ENCODE measurements at regions of chr7 and their contacts with region 1.

Region 1: GRCh38 chr7:23298885-23299769 is at the start of gene MALSU1:
- DNase-seq: peak; percentile 98
- H3K4me3 ChIP-seq: peak within 1 kb of the TSS; percentile 73 to 81 (median 75)
- H3K27ac ChIP-seq: peak within 1 kb of the TSS; percentile 32
- H3K4me1 ChIP-seq: peaks cover 11% of the 10 kb centered on the region
- H3K27me3 ChIP-seq: no peaks in the 10 kb centered on the region
- CTCF ChIP-seq: no peak
- POLR2A ChIP-seq: peak; percentile 88
- total RNA-seq, gene MALSU1: 58.4 and 62.6 TPM in 2 replicates

Region 2: DNA sequence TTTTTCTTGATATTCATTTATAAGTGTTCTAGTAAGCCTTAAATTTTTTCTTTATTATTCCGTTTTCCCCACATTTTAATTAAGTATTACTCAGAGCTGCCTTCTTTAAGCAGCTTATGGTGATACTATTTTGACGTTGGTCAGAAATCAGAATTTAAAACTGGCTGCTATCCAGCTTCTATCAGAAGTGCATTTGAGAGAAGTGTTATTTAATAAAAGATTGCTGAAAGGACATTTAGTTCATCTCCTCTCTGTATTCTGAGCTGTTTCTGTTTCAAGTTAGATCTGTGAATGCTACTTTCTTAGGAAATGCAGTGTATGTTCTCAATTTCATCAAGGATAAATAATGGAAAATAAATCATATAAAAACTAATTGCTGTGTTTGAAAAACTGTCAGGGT is 176.1 kb before region 1 on chr7:
- CTCF ChIA-PET with region 1: no interaction called
- POLR2A ChIA-PET with region 1: no interaction called
- dilution Hi-C with region 1: no loop called
- intact Hi-C with region 1: no loop called
- DNase-seq: no peak
- H3K4me3 ChIP-seq: no peak overlapping the region
- H3K27ac ChIP-seq: no peak overlapping the region
- H3K4me1 ChIP-seq: no peaks in the 10 kb centered on the region
- H3K27me3 ChIP-seq: no peaks in the 10 kb centered on the region
- CTCF ChIP-seq: no peak
- POLR2A ChIP-seq: no peak

Region 3: DNA sequence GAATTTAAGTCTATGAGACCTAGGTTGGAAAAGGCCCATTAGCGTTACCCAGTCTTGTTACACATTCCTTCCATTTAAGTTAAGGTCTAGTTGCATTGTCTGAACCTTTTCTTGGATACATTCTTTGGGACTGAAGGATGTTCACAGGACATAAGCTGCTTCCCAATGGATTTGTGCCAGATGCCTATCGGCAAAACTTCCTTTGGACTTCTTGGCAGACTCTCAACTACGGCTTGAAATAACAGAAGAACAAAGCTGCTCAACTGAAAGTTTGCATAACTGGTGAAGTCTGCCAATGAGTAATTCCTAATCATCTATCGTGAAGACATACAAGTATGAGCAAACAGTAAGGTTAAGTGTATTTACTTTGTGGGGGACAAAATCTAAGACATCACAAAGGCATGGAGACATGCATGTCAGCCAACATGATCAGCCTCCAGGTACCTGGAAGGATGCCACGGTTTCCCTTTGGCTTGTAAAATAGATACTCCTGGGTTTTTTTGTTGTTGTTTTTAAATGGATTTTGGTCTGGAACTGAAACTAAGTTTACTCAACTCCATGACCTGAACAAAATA is 35.4 kb after region 1 on chr7:
- CTCF ChIA-PET with region 1: no interaction called
- POLR2A ChIA-PET with region 1: no interaction called
- dilution Hi-C with region 1: no loop called
- intact Hi-C with region 1: loop called (anchors 2 kb)
- DNase-seq: peak; percentile 99
- H3K4me3 ChIP-seq: no peak overlapping the region
- H3K27ac ChIP-seq: peak overlapping the region; percentile 93
- H3K4me1 ChIP-seq: peaks cover 46% of the 10 kb centered on the region
- H3K27me3 ChIP-seq: no peaks in the 10 kb centered on the region
- CTCF ChIP-seq: no peak
- POLR2A ChIP-seq: peak; percentile 76

Region 4: DNA sequence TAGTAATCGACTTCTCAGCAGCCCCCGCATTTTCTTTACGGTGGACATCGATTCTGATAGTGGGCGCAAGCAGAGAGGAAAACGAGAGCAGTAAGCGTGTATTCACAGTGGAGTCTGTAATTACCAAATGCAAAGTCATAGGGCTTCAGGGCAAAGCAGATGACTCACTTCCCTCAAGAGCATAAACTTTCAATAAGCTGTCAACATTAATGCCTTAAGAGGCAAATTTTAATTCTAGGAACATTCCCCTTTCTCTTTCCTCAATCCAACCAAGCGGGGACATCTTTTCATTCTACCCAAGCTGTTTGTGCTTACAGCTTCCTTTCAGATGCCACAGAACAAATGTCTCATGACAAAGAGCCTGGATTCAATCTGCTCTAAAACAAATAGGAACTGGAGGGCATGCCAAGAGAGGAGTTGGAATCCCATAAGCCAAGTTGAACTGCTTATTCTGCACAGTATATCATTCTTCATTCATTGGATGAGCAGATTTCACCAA is 48.6 kb after region 1 on chr7:
- CTCF ChIA-PET with region 1: interaction called, 3 read pairs
- POLR2A ChIA-PET with region 1: interaction called, 4 read pairs
- dilution Hi-C with region 1: no loop called
- intact Hi-C with region 1: loop called (anchors 1 kb)
- DNase-seq: peak; percentile 88
- H3K4me3 ChIP-seq: peak overlapping the region; percentile 27 to 67 (median 61)
- H3K27ac ChIP-seq: peak overlapping the region; percentile 88
- H3K4me1 ChIP-seq: peaks cover 80% of the 10 kb centered on the region
- H3K27me3 ChIP-seq: no peaks in the 10 kb centered on the region
- CTCF ChIP-seq: no peak
- POLR2A ChIP-seq: peak; percentile 44

Region 5: GRCh38 chr7:23418046-23418445 is 118.9 kb after region 1 on chr7:
- CTCF ChIA-PET with region 1: interaction called, 4 read pairs
- POLR2A ChIA-PET with region 1: no interaction called
- dilution Hi-C with region 1: no loop called
- intact Hi-C with region 1: loop called (anchors 5 kb)
- DNase-seq: peak; percentile 84
- H3K4me3 ChIP-seq: no peak overlapping the region
- H3K27ac ChIP-seq: peak overlapping the region; percentile 32
- H3K4me1 ChIP-seq: peaks cover 26% of the 10 kb centered on the region
- H3K27me3 ChIP-seq: no peaks in the 10 kb centered on the region
- CTCF ChIP-seq: no peak
- POLR2A ChIP-seq: no peak

Region 6: DNA sequence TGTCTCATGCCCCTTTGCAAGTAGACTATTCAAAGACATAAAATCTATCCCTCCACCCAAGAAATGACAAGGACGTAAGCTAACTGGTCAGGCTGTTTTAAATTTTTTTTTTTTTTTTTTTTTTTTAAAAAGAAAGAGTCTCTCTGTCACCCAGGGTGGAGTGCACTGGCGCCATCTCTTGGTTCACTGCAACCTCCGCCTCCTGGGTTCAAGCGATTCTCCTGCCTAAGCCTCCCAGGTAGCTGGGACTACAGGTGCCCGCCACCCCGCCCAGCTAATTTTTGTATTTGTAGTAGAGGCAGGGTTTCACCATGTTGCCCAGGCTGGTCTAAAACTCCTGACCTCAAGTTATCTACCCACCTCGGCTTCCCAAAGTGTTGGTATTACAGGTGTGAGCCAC is 221.5 kb after region 1 on chr7:
- CTCF ChIA-PET with region 1: interaction called, 3 read pairs
- POLR2A ChIA-PET with region 1: no interaction called
- dilution Hi-C with region 1: loop called (anchors 25 kb)
- intact Hi-C with region 1: no loop called
- DNase-seq: no peak
- H3K4me3 ChIP-seq: no peak overlapping the region
- H3K27ac ChIP-seq: no peak overlapping the region
- H3K4me1 ChIP-seq: no peaks in the 10 kb centered on the region
- H3K27me3 ChIP-seq: no peaks in the 10 kb centered on the region
- CTCF ChIP-seq: peak in 1 of 2 donors; percentile 7
- POLR2A ChIP-seq: no peak